ENCODE measurements at regions of chr1 and their contacts with region 1.

Region 1: GRCh38 chr1:178693366-178693765 is 31.7 kb upstream of the RALGPS2 start:
- DNase-seq: no peak
- H3K4me3 ChIP-seq: no peak overlapping the region
- H3K27ac ChIP-seq: no peak overlapping the region
- H3K4me1 ChIP-seq: no peaks in the 10 kb centered on the region
- H3K27me3 ChIP-seq: no peaks in the 10 kb centered on the region
- CTCF ChIP-seq: no peak
- POLR2A ChIP-seq: no peak

Region 2: DNA sequence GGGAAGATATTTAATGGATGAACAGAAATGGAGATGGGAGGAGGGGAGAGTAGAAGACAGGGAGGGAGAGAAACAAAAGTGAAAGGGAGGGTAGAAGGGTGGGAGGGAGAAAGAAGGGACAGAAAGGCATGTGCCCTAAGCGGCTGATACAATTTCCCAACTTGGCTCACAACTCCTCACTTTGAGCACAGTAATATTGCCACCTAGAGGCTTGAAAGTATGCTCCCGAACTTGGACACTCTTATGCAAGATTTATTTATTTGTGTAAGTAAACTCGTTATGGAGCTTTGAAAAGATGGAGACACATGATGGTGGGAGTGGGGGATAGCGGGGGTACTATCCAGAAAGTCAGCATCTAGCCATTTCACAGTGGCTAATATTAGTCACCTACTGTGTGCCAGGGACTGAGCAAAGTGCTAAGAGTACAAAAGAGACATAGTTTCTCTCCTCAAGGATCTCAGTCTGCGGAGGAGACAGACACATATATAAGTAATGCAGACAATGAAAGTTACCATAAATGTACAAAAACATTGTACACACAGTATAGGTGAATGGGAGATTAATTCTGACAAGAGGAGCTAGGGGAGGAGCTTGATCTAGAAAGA is 913.2 kb before region 1 on chr1:
- intact Hi-C with region 1: no loop called
- DNase-seq: no peak
- H3K4me3 ChIP-seq: no peak overlapping the region
- H3K27ac ChIP-seq: no peak overlapping the region
- H3K4me1 ChIP-seq: no peaks in the 10 kb centered on the region
- H3K27me3 ChIP-seq: no peaks in the 10 kb centered on the region
- CTCF ChIP-seq: peak in 2 of 3 donors; percentile 50 to 53
- POLR2A ChIP-seq: no peak

Region 3: GRCh38 chr1:179058487-179059483 is 365.4 kb after region 1 on chr1:
- intact Hi-C with region 1: no loop called
- DNase-seq: no peak
- H3K4me3 ChIP-seq: no peak overlapping the region
- H3K27ac ChIP-seq: no peak overlapping the region
- H3K4me1 ChIP-seq: no peaks in the 10 kb centered on the region
- H3K27me3 ChIP-seq: no peaks in the 10 kb centered on the region
- CTCF ChIP-seq: no peak
- POLR2A ChIP-seq: no peak

Region 4: DNA sequence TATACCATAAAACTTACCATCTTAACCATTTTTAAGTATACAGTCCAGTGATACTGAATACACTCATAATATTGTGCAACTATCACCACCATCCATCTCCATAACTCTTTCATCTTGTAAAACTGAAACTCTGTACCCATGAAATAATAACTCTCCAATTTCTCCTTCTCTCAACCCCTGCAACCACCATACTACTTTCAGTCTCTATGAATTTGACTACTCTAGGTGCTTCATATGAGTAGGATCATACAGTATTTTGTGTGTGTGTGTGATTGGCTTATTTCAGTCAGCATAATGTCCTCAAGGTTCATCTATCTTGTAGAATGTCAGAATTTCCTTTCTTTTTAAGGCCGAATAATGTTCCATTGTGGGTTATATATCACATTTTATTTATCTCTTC is 864.7 kb after region 1 on chr1:
- intact Hi-C with region 1: loop called (anchors 5 kb)
- DNase-seq: no peak
- H3K4me3 ChIP-seq: no peak overlapping the region
- H3K27ac ChIP-seq: no peak overlapping the region
- H3K4me1 ChIP-seq: no peaks in the 10 kb centered on the region
- H3K27me3 ChIP-seq: no peaks in the 10 kb centered on the region
- CTCF ChIP-seq: no peak
- POLR2A ChIP-seq: no peak